GM12878 (cell line): ENCODE measurements at regions of chr2 and their contacts with region 1.

Region 1: DNA sequence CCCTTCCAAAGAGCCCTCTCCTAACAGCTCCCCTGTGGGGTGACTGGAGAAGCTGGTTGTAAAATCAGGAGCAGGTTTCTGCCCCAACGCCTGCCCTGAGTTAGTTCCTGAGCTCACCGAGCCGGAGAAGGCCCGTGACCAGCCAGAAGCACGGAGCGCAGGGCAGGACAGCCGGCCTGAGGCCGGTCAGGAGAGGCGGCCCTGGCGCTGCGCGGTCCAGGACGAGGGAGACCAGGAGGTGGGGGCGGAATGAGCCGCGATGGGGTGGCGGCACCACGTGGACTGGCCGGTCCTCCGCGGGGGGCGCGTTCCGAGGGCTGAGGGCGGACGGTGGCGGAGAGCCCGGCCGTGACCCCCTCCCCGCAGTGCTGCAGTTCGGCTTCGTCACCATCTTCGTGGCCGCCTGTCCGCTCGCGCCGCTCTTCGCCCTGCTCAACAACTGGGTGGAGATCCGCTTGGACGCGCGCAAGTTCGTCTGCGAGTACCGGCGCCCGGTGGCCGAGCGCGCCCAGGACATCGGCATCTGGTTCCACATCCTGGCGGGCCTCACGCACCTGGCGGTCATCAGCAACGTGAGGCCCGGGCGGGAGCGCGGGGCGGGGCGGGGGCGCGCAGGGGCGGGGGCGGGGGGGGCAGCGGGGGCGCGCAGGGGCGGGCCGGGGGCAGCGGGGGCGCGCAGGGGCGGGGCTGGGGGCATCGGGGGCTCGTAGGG is 29.0 kb downstream of the ANO7 start:
- DNase-seq: no peak
- ATAC-seq: peak; percentile 80
- H3K4me3 ChIP-seq: peak overlapping the region; percentile 64
- H3K27ac ChIP-seq: no peak overlapping the region
- H3K4me1 ChIP-seq: no peaks in the 10 kb centered on the region
- H3K27me3 ChIP-seq: no peaks in the 10 kb centered on the region
- CTCF ChIP-seq: peak in 1 of 3 experiments; percentile 5; a peak in 1 of 6 replicates
- EP300 ChIP-seq: no peak
- POLR2A ChIP-seq: no peak
- RAD21 ChIP-seq: no peak

Region 2: GRCh38 chr2:241074901-241075540 is 142.5 kb before region 1 on chr2:
- CTCF ChIA-PET with region 1: interaction called, 13 read pairs
- POLR2A ChIA-PET with region 1: interaction called, 3 read pairs
- RAD21 ChIA-PET with region 1: interaction called, 13 read pairs
- SMC1A ChIA-PET with region 1: interaction called, 5 read pairs
- in situ Hi-C with region 1: loop called (anchors 5 kb)
- intact Hi-C with region 1: loop called (anchors 5 kb)
- DNase-seq: no peak
- ATAC-seq: no peak
- H3K4me3 ChIP-seq: no peak overlapping the region
- H3K27ac ChIP-seq: no peak overlapping the region
- H3K4me1 ChIP-seq: no peaks in the 10 kb centered on the region
- H3K27me3 ChIP-seq: no peaks in the 10 kb centered on the region
- CTCF ChIP-seq: no peak
- EP300 ChIP-seq: no peak
- POLR2A ChIP-seq: no peak
- RAD21 ChIP-seq: no peak

Region 3: DNA sequence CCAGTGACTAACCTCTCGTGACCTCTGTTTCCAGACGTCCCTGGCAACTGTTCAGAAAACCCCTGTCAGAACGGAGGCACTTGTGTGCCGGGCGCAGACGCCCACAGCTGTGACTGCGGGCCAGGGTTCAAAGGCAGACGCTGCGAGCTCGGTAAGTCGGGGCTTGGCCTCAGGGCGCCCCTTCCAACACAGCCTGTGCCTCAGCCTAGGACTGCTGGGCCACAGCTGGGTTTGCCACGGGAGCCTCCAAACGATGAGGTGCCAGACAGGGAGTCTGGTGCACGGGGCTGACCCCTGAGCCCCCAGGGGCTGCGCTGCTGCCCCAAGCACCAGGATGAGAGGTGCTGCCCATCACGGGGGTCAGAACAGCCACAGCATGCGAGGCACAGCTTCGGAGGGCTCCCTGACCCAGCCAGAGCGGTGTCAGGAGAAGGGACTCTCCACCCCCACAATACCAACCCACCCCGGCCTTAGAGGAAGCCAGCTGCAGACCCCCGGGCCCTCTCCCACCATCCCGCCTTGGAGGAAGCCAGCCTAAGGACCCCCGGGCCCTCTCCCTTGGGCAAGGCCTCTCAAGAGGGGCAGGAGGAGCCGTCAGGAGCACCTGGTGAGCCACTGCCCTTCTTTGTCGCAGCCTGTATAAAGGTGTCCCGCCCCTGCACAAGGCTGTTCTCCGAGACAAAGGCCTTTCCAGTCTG is 135.7 kb before region 1 on chr2:
- CTCF ChIA-PET with region 1: interaction called, 13 read pairs
- POLR2A ChIA-PET with region 1: interaction called, 3 read pairs
- RAD21 ChIA-PET with region 1: interaction called, 13 read pairs
- SMC1A ChIA-PET with region 1: interaction called, 5 read pairs
- in situ Hi-C with region 1: loop called (anchors 5 kb)
- intact Hi-C with region 1: loop called (anchors 5 kb)
- DNase-seq: no peak
- ATAC-seq: no peak
- H3K4me3 ChIP-seq: no peak overlapping the region
- H3K27ac ChIP-seq: no peak overlapping the region
- H3K4me1 ChIP-seq: no peaks in the 10 kb centered on the region; the same call in 1 of the 2 replicates
- H3K27me3 ChIP-seq: no peaks in the 10 kb centered on the region
- CTCF ChIP-seq: no peak
- EP300 ChIP-seq: no peak
- POLR2A ChIP-seq: 0 out of 2 replicates have a peak, but pooled peaks have one; percentile 16
- RAD21 ChIP-seq: no peak

Region 4: DNA sequence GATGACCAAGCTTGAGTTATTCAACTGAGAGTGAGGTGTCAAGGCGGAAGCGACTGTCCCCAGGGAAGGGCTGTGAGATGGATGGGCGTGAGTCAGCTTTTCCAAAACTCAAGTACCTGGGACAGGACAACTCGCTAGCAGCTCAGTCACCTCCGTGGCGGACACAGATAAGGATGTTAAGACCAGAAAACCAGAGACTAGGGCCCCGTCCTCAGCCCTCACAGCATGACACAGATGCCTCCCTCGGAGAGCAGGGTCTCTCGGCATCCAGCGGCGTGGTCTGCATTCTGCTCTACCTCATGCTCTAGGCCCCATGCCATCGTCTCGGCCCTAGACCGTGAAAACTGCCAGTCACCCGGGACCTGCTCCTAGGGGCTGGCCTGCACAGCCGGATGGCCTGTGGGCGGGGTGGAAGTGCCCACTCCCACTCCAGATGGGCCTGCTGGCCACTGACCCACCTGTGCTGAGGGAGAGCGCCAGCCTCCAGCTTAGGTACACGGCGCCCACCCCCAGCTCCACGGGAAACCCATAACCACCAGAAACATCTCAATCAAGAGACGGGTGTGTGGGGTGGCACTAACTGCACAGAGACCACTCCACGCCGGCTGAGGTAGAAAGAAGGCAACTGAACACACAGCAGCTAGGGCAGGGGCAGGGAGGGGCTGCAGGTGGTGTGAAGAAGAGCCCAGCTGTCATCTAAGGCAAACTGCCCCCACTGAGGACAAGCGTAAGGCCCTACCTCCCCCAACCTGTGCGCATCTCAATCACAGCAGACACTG is 10.8 kb after region 1 on chr2:
- CTCF ChIA-PET with region 1: no interaction called
- POLR2A ChIA-PET with region 1: no interaction called
- RAD21 ChIA-PET with region 1: no interaction called
- SMC1A ChIA-PET with region 1: no interaction called
- in situ Hi-C with region 1: no loop called
- intact Hi-C with region 1: no loop called
- DNase-seq: no peak
- ATAC-seq: no peak
- H3K4me3 ChIP-seq: no peak overlapping the region
- H3K27ac ChIP-seq: no peak overlapping the region
- H3K4me1 ChIP-seq: no peaks in the 10 kb centered on the region
- H3K27me3 ChIP-seq: no peaks in the 10 kb centered on the region
- CTCF ChIP-seq: no peak
- EP300 ChIP-seq: no peak
- POLR2A ChIP-seq: no peak
- RAD21 ChIP-seq: no peak